Activated naive CD4-positive, alpha-beta T cell treated with anti-CD3 and anti-CD28 coated beads for 36 hours (primary cell): ENCODE measurements at regions of chr2 and their contacts with region 1.

Region 1: GRCh38 chr2:238009563-238009962 is 42.7 kb downstream of the UBE2F start:
- DNase-seq: no peak
- H3K4me3 Mint-ChIP-seq: peak overlapping the region; percentile 33
- H3K27ac Mint-ChIP-seq: no peak overlapping the region
- H3K4me1 Mint-ChIP-seq: peaks cover 44% of the 10 kb centered on the region
- H3K27me3 Mint-ChIP-seq: no peaks in the 10 kb centered on the region

Region 2: DNA sequence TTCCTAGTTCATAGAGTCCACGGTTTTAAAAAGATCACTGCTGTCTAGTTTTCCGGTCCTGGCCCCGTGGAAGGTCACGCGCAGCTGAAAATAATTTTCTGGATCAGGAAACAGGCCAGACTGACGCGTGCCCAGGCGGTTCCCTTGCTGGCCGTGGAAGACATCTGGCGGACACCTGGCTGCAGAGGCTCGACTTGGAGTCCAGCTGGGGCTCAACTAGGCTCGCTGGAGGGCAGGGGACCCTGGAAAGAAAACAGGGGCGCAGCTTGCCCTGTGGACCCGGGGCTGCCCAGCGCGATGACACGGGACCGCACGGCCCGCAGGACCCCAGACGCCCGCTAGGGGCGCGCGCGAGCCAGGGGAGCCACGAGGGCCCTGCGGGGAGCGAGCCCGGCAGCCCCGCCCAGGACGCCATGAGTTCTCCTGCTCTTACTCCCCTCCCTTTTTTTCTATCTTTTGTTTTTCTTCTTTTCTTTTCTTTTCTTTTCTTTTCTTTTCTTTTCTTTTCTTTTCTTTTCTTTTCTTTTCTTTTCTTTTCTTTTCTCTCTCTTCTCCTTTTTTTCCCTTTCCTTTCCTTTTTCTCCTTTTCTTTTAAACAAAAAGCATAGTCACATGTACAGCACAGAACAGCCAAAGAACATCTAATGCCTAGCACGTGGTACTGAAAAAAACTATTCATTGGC is 85.9 kb before region 1 on chr2:
- CTCF ChIA-PET with region 1: interaction called, 3 read pairs
- intact Hi-C with region 1: loop called (anchors 5 kb)
- DNase-seq: peak; percentile 80
- H3K4me3 Mint-ChIP-seq: peak overlapping the region; percentile 52
- H3K27ac Mint-ChIP-seq: no peak overlapping the region
- H3K4me1 Mint-ChIP-seq: peaks cover 21% of the 10 kb centered on the region
- H3K27me3 Mint-ChIP-seq: no peaks in the 10 kb centered on the region